Activated CD8-positive, alpha-beta T cell treated with anti-CD3 and anti-CD28 coated beads, Interleukin-2, amount 10 ng/mL, durations not matched to agents 7 days and 5 days (primary cell): ENCODE measurements at regions of chr2 and their contacts with region 1.

Region 1: DNA sequence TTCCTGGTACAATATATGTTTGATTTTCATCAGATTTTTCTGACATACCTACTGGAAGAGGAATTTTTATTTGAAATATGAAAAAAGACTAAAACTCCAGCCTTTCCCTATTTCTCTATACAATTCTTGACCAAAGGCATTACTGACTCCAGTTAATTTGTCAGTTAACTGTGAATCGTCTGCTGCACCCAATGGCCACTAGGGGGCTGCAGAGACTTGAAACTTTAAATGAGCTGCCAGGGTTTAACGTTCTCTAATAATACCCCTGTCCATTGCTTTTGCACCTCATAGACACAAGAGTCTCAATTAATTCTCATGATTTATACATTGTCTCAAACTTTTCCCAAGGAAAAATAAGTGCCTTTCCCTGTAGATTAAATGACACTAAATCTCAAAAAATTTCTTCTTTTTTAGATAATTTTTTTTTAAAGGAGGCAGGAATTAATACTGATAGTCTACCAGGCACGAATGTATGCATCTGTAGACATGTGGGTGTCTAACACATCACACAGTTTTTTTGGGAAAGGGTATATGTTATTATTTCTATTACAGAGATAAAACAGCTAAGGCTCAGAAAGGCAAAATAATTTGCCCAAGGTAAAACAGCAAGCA is 1.8 kb upstream of the ALK start:
- DNase-seq: peak; percentile 62
- ATAC-seq: no peak
- H3K4me3 Mint-ChIP-seq: no peak overlapping the region
- H3K27ac Mint-ChIP-seq: no peak overlapping the region
- H3K4me1 Mint-ChIP-seq: no peaks in the 10 kb centered on the region
- H3K27me3 Mint-ChIP-seq: peaks cover 40% of the 10 kb centered on the region

Region 2: GRCh38 chr2:30072250-30072842 is 149.1 kb after region 1 on chr2:
- CTCF ChIA-PET with region 1: interaction called, 45 read pairs
- POLR2A ChIA-PET with region 1: no interaction called
- DNase-seq: peak; percentile 77
- ATAC-seq: peak; percentile 94
- H3K4me3 Mint-ChIP-seq: no peak overlapping the region
- H3K27ac Mint-ChIP-seq: no peak overlapping the region
- H3K4me1 Mint-ChIP-seq: no peaks in the 10 kb centered on the region
- H3K27me3 Mint-ChIP-seq: peaks cover 11% of the 10 kb centered on the region